ENCODE measurements at regions of chr15 and their contacts with region 1.

Region 1: DNA sequence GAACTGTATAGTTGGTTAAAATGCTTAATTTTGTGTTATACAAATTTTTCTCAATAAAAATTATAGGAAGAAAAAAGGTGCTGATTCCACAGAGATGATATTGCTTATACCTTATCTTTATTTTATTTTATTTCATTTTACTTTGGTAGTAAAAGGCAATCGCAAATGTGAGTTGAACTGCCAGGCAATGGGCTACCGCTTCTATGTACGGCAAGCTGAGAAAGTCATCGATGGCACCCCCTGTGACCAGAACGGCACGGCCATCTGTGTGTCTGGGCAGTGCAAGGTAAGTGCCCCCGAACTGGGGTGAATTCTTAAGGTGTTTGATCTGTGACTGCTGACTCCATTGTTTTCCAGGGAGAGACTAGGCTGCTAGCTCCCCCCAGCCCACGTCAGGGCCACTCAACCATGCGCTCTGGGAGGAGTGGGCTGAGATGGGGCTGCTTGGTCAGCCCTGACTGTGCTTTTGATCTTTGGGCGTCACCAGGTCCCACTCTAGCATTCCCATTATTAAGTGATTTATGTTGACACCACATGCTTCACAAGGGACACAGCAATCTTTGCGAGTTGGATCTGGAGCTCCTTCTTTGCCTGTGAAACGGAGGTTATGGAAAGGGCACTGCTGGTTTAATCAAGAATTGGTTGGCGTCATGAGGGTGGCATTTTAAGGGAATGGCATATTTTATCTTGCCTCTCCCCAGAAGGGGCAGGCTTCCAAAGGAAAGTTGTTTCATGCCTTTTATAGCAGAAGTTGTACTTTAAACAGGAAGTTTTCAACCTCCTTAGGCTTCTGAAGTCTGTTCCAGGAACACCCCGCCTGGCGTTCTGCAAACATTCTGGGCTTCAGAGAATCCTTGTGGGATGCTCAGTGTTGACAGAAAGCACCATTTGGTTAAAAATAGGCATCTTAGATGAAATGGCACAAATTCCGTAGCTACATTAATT is 296.5 kb downstream of the THSD4 start:
- DNase-seq: no peak
- H3K4me3 ChIP-seq: no peak overlapping the region
- H3K27ac ChIP-seq: no peak overlapping the region
- H3K4me1 ChIP-seq: no peaks in the 10 kb centered on the region
- H3K27me3 ChIP-seq: no peaks in the 10 kb centered on the region
- CTCF ChIP-seq: peak in 1 of 3 experiments; percentile 4; a peak in 1 of 4 replicates
- EP300 ChIP-seq: no peak
- POLR2A ChIP-seq: no peak
- RAD21 ChIP-seq: no peak

Region 2: DNA sequence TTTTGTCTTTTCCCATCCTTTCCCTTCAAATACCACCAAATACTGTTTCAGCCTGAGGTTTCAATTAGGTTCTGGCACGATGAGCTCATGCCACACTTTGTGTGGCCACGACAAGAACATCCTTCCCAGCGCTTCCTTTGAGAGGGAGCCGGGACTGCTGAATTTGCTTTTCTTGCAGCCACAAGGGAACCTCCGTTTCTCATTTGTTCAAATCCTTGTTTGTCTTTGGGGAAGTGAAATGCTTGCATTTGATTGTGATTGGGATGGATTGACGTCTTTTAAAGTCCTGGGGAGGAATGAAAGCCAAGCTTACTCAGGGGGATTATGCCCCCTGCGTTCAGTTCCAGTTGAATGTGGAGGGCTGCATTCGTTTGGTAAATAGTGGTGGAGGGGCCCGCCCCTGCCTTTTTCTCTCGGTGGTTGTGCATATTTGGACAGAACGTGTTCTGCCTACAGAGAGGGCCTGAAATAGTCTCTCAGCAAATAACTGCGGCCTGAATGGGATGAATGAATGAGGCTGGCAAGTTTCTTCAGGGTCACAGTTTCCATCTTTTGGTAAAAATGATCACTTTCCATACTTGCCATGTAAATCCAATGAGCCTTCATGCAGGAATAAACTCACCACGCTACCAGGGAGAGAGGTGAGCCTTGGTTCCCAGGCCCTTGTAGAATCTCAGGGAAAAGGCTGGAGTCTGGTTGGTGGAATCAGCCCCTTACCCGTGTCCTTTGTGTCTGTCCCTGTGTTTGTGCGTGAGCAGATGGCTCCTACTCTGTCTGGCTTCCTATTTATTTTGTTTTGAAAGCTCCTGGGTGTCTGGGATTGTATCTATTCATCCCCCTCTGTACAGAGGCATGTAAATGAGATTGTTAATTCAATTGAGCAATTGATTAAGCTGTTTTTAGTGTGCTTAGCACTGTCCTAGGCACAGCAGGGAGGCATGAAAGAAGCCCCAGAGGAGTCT is 18.7 kb before region 1 on chr15:
- CTCF ChIA-PET with region 1: interaction called, 10 read pairs
- POLR2A ChIA-PET with region 1: no interaction called
- DNase-seq: no peak
- H3K4me3 ChIP-seq: no peak overlapping the region
- H3K27ac ChIP-seq: no peak overlapping the region
- H3K4me1 ChIP-seq: peaks cover 7 to 12% (median 10%) of the 10 kb centered on the region in 4 experiments; a peak in 6 of 7 replicates
- H3K27me3 ChIP-seq: no peaks in the 10 kb centered on the region; a peak in 1 of 7 replicates
- CTCF ChIP-seq: no peak
- EP300 ChIP-seq: no peak
- POLR2A ChIP-seq: no peak
- RAD21 ChIP-seq: no peak

Region 3: GRCh38 chr15:71730277-71731144 is 318.7 kb after region 1 on chr15:
- CTCF ChIA-PET with region 1: no interaction called
- POLR2A ChIA-PET with region 1: no interaction called
- DNase-seq: peak in 1 of 2 experiments; percentile 54
- H3K4me3 ChIP-seq: no peak overlapping the region
- H3K27ac ChIP-seq: no peak overlapping the region
- H3K4me1 ChIP-seq: no peaks in the 10 kb centered on the region
- H3K27me3 ChIP-seq: no peaks in the 10 kb centered on the region
- CTCF ChIP-seq: peak; percentile 48 to 83 (median 71)
- EP300 ChIP-seq: no peak
- POLR2A ChIP-seq: no peak
- RAD21 ChIP-seq: peak; percentile 70 to 74

Measured in H1 (cell line).